ENCODE measurements at regions of chr6 and their contacts with region 1.

Region 1: GRCh38 chr6:5095236-5095635 is 10.1 kb downstream of the PPP1R3G start:
- DNase-seq: no peak
- ATAC-seq: peak; percentile 81
- H3K4me3 Mint-ChIP-seq: peak overlapping the region; percentile 44
- H3K27ac Mint-ChIP-seq: peak overlapping the region; percentile 66
- H3K4me1 Mint-ChIP-seq: peaks cover 49% of the 10 kb centered on the region
- H3K27me3 Mint-ChIP-seq: no peaks in the 10 kb centered on the region
- CTCF ChIP-seq: no peak

Region 2: DNA sequence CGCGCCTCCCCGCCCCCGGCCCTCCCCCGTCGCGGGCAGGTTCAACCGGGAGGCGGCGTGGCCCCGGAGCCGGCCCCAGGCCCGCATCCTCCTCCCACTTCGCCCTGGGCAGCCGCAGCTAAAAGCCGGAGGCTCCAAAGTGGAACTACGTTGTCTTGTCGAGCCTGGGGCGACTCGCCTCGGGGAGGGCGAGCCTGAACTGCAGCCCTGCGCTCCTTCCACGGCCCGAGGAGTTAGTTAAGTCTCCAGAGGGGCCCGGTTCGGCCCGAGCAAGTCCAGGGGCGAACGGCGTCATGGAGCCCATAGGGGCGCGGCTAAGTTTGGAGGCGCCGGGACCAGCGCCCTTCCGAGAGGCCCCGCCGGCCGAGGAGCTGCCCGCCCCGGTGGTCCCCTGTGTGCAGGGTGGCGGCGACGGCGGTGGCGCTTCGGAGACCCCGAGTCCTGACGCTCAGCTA is 10.0 kb before region 1 on chr6 and contains the start of gene PPP1R3G:
- CTCF ChIA-PET with region 1: no interaction called
- POLR2A ChIA-PET with region 1: no interaction called
- intact Hi-C with region 1: no loop called
- DNase-seq: no peak
- ATAC-seq: peak; percentile 11
- H3K4me3 Mint-ChIP-seq: peak within 1 kb of the TSS; percentile 86
- H3K27ac Mint-ChIP-seq: no peak within 1 kb of the TSS
- H3K4me1 Mint-ChIP-seq: peaks cover 27% of the 10 kb centered on the region
- H3K27me3 Mint-ChIP-seq: peaks cover 22% of the 10 kb centered on the region
- CTCF ChIP-seq: no peak
- total RNA-seq, gene PPP1R3G: 0.11 and 0.15 TPM in 2 replicates

Region 3: DNA sequence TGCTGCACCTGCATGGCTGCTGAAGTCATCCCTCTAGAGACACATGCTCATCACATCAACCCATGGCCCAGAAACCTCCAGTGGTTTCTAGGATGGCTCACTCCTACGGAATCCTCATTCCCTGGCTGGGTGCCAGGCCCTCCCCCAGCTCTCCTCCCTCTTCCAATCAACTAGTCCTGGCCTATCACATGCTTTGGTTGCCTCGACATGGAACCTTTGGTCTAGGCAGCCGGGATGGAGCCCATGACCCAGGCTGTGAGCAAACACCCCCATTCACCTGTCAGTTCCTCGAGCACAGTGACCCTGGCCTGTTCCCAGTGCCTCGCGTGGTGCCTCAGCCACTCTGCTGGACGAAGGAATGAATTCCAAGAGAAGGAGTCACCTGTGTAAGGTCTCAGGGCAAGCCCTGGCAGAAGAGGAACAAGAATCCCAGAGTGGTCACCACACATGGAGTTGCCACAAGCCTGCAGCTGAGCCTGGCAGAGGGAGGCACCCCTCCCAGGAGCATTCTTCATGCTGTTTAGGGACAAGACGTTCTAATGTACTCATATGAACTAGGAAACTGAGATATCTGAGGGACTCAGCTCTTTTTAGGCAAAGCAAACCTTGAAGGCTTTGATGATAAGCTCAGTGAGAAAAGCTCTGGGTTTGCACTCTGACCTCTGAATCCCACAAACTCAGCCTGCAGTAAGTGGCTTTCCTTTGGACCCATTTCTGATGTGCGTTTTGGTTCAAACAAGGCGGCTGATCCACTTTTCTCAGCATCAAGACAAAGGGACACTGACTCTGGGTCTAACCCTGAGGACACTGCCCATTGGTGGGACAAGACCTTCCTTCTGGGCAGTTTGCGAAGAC is 30.1 kb after region 1 on chr6:
- CTCF ChIA-PET with region 1: no interaction called
- POLR2A ChIA-PET with region 1: no interaction called
- intact Hi-C with region 1: no loop called
- DNase-seq: no peak
- ATAC-seq: no peak
- H3K4me3 Mint-ChIP-seq: no peak overlapping the region
- H3K27ac Mint-ChIP-seq: no peak overlapping the region
- H3K4me1 Mint-ChIP-seq: peaks cover 10% of the 10 kb centered on the region
- H3K27me3 Mint-ChIP-seq: no peaks in the 10 kb centered on the region
- CTCF ChIP-seq: no peak

Region 4: DNA sequence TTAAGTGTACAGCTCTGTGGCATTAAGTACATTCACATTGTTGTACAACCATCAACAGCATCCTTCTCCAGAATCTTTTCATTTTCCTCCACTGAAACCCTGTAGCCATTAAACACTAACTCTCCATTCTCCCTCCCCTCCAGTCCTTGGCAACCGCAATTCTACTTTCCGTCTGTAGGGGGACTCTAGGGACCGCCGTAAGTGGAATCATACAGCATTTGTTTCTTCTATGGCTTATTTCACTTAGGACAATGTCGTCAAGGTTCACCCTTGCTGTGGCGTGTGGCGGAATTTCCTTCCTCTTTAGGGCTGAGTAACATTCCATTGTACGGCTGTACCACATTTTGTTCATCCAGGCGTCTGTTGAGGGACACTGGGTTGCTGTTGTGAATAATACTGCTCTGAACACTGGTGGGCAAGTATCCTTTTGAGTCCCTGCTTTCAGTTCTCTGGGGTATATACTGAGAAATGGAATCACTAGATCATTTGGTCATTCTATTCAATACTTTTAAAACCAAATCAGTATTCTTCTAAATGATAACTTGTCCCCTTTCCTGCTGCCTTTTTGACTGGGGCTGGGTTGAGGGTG is 40.6 kb after region 1 on chr6:
- CTCF ChIA-PET with region 1: no interaction called
- POLR2A ChIA-PET with region 1: no interaction called
- intact Hi-C with region 1: loop called (anchors 2 kb)
- DNase-seq: no peak
- ATAC-seq: peak; percentile 27
- H3K4me3 Mint-ChIP-seq: no peak overlapping the region
- H3K27ac Mint-ChIP-seq: no peak overlapping the region
- H3K4me1 Mint-ChIP-seq: peaks cover 59% of the 10 kb centered on the region
- H3K27me3 Mint-ChIP-seq: no peaks in the 10 kb centered on the region
- CTCF ChIP-seq: peak; percentile 52